GM10248 (cell line): ENCODE measurements at regions of chr17 and their contacts with region 1.

Region 1: GRCh38 chr17:376936-377863 is 24.6 kb upstream of the RPH3AL start:
- DNase-seq: no peak
- CTCF ChIP-seq: no peak

Region 2: DNA sequence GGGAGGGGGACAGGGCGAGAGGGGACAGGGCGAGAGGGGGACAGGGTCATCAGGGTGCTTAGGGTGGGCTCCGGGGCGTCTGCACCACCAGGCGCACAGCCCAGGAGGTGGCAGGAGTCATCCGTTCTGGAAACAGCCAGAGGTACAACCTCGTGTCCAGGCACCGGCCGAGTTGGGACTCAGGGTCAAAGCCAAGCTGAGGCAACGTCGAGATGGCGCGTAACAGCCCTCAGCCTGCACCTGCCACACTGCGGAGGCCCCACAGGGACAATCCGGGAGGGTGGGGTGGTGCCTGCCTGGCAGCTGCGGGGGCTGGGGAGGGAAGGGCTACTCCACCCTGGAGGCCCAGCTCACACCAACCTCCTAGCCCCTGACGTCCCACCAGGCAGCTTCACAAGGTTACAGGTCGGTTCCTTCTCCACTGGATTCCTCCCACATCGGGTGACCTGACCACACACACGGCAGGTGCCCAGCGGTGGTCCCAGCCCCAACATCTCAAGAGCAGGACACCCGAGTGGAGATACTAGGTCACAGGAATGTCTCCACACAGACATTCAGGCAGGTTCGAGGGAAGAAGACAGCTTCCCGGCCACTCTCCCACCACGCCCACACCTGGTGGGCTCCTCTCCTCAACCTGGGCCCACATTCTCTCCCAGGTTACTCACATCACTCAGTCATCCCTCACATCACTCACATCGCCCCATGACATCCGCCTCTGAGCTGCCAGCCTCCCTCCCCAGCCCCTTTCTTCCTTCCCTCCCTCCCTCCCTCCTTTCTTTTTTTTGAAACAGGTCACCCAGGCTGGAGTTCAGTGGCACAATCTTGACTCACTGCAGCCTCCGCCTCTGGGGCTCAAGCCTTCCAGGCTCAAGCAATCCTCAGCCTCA is 71.9 kb before region 1 on chr17:
- CTCF ChIA-PET with region 1: no interaction called
- POLR2A ChIA-PET with region 1: interaction called, 12 read pairs
- DNase-seq: no peak
- CTCF ChIP-seq: no peak